ENCODE measurements at regions of chr17 and their contacts with region 1.

Region 1: DNA sequence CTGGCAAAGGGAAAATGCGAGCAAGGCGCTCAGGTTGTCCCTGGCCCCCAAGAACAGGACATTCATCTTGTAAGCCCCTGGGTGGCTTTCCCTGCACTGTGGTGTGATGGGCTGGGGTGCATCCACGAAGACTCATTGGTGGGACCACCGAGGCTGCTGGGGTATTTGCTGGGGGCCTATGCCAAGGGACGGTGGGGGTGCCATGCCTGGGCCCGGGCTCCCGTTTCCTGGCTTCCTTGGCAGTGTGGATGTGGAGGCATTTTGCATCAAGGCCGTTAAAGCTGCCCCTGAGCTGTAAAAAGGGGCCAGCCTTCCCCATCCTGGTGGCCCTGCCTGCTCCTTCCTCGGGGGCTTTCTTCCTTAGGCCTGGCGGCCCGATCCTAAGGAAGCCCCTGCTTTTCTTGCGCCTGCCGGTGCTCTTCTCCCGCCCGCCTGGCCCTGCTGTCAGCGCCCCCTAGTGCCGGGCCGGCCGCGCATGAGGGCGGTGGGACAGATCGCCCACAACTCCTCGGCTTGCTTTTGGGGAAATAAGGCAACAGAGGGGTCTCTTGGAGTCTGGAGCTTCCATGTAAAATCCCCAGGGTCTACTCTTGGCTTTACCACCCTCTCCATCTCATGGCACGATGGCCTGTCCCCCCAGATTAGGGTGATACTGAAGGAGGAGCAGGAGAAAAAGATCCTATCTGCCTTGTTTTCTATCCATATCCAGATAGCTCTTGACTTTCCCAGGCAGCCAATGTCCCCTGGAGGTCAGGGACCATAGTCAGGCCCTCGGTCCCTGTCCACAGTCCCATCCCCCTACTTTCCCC is 9.8 kb upstream of the TBX2 start:
- DNase-seq: no peak
- H3K4me3 ChIP-seq: no peak overlapping the region
- CTCF ChIP-seq: peak in 1 of 3 donors; percentile 17
- POLR2A ChIP-seq: no peak

Region 2: GRCh38 chr17:60712675-60713074 is 677.2 kb before region 1 on chr17:
- intact Hi-C with region 1: loop called (anchors 10 kb)
- DNase-seq: no peak
- H3K4me3 ChIP-seq: no peak overlapping the region
- CTCF ChIP-seq: no peak
- POLR2A ChIP-seq: no peak

Region 3: DNA sequence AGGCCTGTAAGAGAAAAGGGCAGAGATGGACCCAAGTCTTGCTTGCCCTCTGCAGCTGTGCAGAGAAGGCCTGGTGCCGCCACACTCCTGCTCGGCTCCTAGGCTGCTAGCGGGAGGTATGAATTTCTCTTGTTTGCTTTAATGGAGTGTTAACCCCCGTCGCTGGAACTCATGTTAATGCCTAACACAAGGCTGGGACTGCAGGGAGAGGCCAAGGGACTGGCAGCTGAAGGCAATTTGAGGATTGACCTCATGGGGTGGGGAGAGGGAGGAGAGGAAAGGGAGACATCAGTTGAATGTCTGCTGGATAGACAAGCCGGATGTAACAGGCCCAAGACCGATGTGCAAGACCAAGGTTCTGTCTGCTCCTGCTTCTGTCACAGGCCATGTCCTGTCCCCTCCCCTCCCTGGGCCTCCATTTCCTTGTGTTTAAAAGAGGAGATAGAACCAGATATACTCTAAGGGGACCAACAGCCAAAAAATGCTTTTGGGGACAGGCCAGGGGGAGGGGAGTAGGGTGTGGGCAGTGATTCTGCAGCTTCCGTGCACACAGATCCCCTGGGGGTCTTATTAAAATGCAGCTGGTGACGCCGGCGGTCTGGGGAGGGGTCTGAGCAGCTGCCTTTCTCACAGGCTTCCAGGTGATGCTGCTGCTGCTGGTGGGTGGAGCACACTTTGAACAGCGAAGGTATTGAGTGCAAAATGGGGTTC is 36.9 kb before region 1 on chr17:
- intact Hi-C with region 1: no loop called
- DNase-seq: no peak
- H3K4me3 ChIP-seq: no peak overlapping the region
- CTCF ChIP-seq: no peak
- POLR2A ChIP-seq: no peak

Region 4: GRCh38 chr17:61454381-61455323 is 64.8 kb after region 1 on chr17:
- intact Hi-C with region 1: no loop called
- DNase-seq: no peak
- H3K4me3 ChIP-seq: no peak overlapping the region
- CTCF ChIP-seq: no peak
- POLR2A ChIP-seq: no peak

Region 5: GRCh38 chr17:61467416-61468259 is 77.8 kb after region 1 on chr17:
- intact Hi-C with region 1: no loop called
- DNase-seq: peak in 1 of 2 donors; percentile 70
- H3K4me3 ChIP-seq: no peak overlapping the region
- CTCF ChIP-seq: no peak
- POLR2A ChIP-seq: no peak

Region 6: GRCh38 chr17:62882878-62883277 is 1493.0 kb after region 1 on chr17:
- intact Hi-C with region 1: loop called (anchors 5 kb)
- DNase-seq: no peak
- H3K4me3 ChIP-seq: no peak overlapping the region
- CTCF ChIP-seq: no peak
- POLR2A ChIP-seq: no peak